Posterior cingulate gyrus (tissue), 11 donors: ENCODE measurements at regions of chr15 and their contacts with region 1.

Region 1: DNA sequence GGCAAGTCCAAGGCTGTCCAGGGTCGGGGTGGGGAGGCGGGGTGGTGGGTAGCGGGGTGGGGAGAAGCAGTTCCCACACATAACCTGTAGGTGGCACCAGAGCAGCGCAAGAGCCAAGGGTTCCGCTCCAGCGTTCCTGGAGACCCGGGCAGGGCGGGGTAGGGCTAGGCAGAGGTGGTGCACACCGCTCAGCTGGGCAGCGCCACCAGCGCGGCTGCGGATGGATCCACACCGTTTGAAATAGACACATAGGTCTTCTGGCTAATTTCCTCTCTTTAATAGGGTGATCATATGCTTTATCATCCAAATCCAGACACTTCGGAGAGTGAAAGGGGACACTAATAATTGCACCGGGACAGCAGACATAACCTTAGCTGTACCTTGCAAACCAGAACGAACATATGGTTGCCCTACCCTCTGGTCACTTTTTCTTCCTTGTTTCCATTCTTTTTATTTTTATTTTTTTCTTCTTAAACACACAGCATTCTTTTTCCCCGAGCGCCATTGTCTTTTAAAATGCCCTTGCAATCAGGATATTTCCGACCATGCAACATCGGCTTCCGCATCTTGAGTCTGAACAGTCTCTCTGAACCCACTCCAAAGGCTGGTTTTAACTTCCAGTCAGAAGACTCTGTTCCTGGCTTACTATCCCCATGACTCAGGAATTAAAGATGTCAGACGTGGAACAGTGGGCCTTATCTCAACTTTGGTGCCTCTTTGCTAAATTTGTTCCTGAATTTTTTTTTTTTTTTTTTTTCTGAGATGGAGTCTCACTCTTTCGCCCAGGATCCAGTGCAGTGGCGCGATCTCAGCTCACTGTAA is 12.5 kb upstream of the ZSCAN2 start:
- DNase-seq: peak; percentile 59 to 97 (median 83)

Region 2: GRCh38 chr15:83356501-83357399 is 1231.5 kb before region 1 on chr15:
- intact Hi-C with region 1: no loop called
- DNase-seq: no peak

Region 3: GRCh38 chr15:84621358-84621979 is 33.2 kb after region 1 on chr15:
- intact Hi-C with region 1: no loop called
- DNase-seq: no peak

Region 4: GRCh38 chr15:84633311-84634227 is 45.3 kb after region 1 on chr15:
- intact Hi-C with region 1: loop called (anchors 5 kb)
- DNase-seq: peak; percentile 41 to 94 (median 65)

Region 5: DNA sequence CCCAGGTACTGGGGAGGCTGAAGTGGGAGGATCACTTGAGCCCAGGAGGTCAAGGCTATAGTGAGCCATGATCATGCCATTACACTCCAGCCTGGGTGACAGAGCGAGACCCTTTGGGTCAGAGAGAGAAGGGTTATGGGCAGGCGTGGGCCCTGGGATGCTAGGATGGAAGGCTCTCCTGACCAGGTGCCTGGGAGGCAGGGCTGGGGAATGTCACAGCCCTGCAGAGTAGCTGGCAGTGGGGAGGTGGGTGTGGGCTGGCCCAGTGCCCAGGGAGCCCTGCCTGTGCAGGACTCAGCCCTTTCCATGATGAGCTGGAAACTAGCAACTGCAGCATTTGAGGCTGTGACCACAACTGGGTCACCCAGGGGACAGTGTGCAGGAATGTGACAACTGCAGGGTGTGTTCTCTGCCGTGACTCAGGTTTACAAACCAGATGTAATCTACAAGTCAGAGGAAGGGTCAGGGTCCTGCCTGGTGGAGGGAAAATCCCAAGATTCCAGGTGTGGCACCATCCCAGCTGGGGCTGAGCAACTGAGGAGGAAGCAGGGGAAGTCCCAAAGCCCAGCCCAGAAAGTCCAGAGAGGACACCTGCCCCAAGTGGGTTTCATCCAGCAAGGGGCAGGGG is 341.6 kb after region 1 on chr15:
- intact Hi-C with region 1: loop called (anchors 5 kb)
- DNase-seq: peak in 1 of 10 donors; percentile 70